Activated T-helper 2 cell treated with anti-CD3 and anti-CD28 coated beads, Interferon-gamma antibody, Interleukin-2, Interleukin-4, amounts not matched to agents 10 μg/mL and 5 μg/mL and 100 μg/mL, durations not matched to agents 14 hours and 24 hours and 36 hours (primary cell): ENCODE measurements at regions of chr4 and their contacts with region 1.

Region 1: GRCh38 chr4:6134612-6135220 is 65.6 kb downstream of the JAKMIP1 start:
- DNase-seq: peak; percentile 33
- H3K4me3 Mint-ChIP-seq: no peak overlapping the region
- H3K27ac Mint-ChIP-seq: no peak overlapping the region
- H3K4me1 Mint-ChIP-seq: peaks cover 18% of the 10 kb centered on the region
- H3K27me3 Mint-ChIP-seq: no peaks in the 10 kb centered on the region

Region 2: GRCh38 chr4:6198768-6199421 is 64.2 kb after region 1 on chr4:
- intact Hi-C with region 1: loop called (anchors 1 kb)
- DNase-seq: no peak
- H3K4me3 Mint-ChIP-seq: peak overlapping the region; percentile 84
- H3K27ac Mint-ChIP-seq: peak overlapping the region; percentile 38
- H3K4me1 Mint-ChIP-seq: peaks cover 34% of the 10 kb centered on the region
- H3K27me3 Mint-ChIP-seq: peaks cover 17% of the 10 kb centered on the region